PC-9 (cell line): ENCODE measurements at regions of chr15 and their contacts with region 1.

Region 1: DNA sequence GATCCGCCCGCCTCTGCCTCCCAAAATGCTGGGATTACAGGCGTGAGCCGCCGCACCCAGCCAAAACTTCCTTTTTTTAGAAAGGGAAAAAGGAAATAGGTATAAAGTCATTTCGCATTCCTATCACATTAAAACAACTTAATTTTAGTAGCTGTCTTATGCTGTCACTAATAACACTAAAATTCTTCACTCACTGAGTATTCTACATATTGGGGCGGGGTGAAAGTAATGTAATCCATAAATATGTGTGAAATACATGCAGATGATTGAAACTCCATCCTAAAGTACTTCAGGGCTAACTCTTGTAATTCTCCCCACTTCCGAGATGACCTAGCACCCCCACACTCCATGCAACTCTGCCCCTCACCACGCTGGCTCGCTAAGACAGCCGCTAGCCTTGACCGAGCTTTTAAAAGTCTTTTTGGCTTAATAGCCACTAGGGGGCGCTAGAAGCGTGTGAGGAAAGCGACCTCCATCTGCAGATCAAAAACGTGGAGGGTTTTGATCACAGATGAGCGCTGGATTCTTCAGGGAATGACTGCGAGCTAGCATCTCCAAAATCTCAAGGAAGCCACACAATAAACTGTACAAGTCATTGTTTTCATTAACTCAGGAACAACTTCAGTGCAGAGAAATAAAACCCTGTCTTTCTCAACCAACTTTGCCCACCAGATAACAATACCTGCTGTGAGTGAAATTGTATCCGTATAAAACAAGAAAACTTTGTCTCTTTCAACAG is 129.3 kb upstream of the IGF1R start:
- DNase-seq: peak; percentile 47 to 62
- H3K4me3 ChIP-seq: no peak overlapping the region
- H3K27ac ChIP-seq: no peak overlapping the region
- H3K4me1 ChIP-seq: no peaks in the 10 kb centered on the region
- H3K27me3 ChIP-seq: 0 out of 2 replicates have a peak, but pooled peaks cover 5% of the 10 kb centered on the region
- CTCF ChIP-seq: peak; percentile 88

Region 2: DNA sequence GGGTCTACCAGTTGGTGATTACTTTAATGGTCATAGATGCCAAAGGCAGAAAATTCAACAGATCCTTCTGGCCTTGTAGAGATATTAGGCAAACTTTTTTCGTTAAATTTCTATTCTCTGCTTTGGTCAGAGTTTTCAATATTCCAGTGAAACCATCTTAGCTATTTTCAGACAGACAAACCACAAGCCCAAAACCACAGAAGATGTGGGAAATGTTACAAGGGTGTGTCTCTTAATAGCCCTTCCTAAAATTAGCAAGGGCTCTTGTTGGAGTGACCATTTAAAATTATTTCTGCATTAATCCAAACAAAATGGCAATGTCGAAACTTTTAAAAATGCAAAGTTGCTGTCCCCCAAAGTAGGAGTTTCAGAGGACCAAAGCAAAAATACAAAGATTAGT is 455.7 kb before region 1 on chr15:
- CTCF ChIA-PET with region 1: no interaction called
- POLR2A ChIA-PET with region 1: no interaction called
- intact Hi-C with region 1: no loop called
- DNase-seq: no peak
- H3K4me3 ChIP-seq: no peak overlapping the region
- H3K27ac ChIP-seq: no peak overlapping the region
- H3K4me1 ChIP-seq: no peaks in the 10 kb centered on the region
- H3K27me3 ChIP-seq: peaks cover 17% of the 10 kb centered on the region; the same call in 1 of the 2 replicates
- CTCF ChIP-seq: no peak

Region 3: GRCh38 chr15:98653686-98654085 is 134.7 kb after region 1 on chr15:
- CTCF ChIA-PET with region 1: interaction called, 19 read pairs
- POLR2A ChIA-PET with region 1: no interaction called
- intact Hi-C with region 1: no loop called
- DNase-seq: no peak
- H3K4me3 ChIP-seq: no peak overlapping the region
- H3K27ac ChIP-seq: no peak overlapping the region
- H3K4me1 ChIP-seq: peaks cover 33% of the 10 kb centered on the region
- H3K27me3 ChIP-seq: no peaks in the 10 kb centered on the region
- CTCF ChIP-seq: no peak

Region 4: DNA sequence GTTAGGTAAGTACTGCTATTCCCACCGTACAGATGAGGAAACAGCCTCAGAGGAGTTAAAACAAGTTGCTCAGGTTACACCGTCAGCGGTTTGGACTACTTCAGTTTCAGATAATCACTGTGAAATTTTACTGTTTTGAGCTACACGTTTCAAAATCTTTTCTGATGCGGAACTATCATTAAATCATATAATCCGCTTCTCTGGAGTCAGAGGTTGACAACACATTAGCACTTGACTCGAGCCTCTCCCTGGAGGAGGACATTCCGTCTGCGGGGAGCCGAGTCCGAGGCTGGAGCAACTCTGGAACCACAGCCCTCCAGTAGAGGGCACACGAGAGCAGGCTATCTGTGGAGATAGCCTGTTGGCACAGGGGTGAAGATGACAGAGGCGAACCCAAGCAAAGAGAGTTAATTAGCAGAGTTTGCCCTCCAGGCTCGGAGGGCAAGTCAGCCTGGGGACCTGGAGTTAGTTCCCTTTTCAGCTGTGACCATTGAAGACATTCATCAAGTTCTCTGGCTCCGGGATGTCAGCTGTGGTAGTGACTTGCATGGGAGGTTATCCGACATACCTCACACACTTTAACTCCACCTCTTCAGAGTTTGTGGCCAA is 260.6 kb after region 1 on chr15:
- CTCF ChIA-PET with region 1: no interaction called
- POLR2A ChIA-PET with region 1: no interaction called
- intact Hi-C with region 1: loop called (anchors 10 kb)
- DNase-seq: peak; percentile 62 to 77
- H3K4me3 ChIP-seq: no peak overlapping the region
- H3K27ac ChIP-seq: no peak overlapping the region
- H3K4me1 ChIP-seq: peaks cover 7% of the 10 kb centered on the region; the same call in 1 of the 2 replicates
- H3K27me3 ChIP-seq: no peaks in the 10 kb centered on the region
- CTCF ChIP-seq: peak; percentile 91

Region 5: GRCh38 chr15:98850961-98851573 is 332.1 kb after region 1 on chr15:
- CTCF ChIA-PET with region 1: interaction called, 12 read pairs
- POLR2A ChIA-PET with region 1: no interaction called
- intact Hi-C with region 1: no loop called
- DNase-seq: peak; percentile 35 to 72
- H3K4me3 ChIP-seq: peak overlapping the region; percentile 59; the same call in 1 of the 2 replicates
- H3K27ac ChIP-seq: peak overlapping the region; percentile 31; the same call in 1 of the 2 replicates
- H3K4me1 ChIP-seq: peaks cover 50% of the 10 kb centered on the region
- H3K27me3 ChIP-seq: no peaks in the 10 kb centered on the region
- CTCF ChIP-seq: peak; percentile 79

Region 6: GRCh38 chr15:99076552-99077308 is 557.7 kb after region 1 on chr15:
- CTCF ChIA-PET with region 1: interaction called, 8 read pairs
- POLR2A ChIA-PET with region 1: no interaction called
- intact Hi-C with region 1: loop called (anchors 1 kb)
- DNase-seq: peak; percentile 51 to 58
- H3K4me3 ChIP-seq: peak overlapping the region; percentile 51; the same call in 1 of the 2 replicates
- H3K27ac ChIP-seq: no peak overlapping the region
- H3K4me1 ChIP-seq: no peaks in the 10 kb centered on the region
- H3K27me3 ChIP-seq: no peaks in the 10 kb centered on the region
- CTCF ChIP-seq: peak; percentile 92

Region 7: GRCh38 chr15:99213187-99213811 is 694.3 kb after region 1 on chr15:
- CTCF ChIA-PET with region 1: no interaction called
- POLR2A ChIA-PET with region 1: no interaction called
- intact Hi-C with region 1: loop called (anchors 5 kb)
- DNase-seq: peak in 1 of 2 experiments; percentile 69
- H3K4me3 ChIP-seq: no peak overlapping the region
- H3K27ac ChIP-seq: no peak overlapping the region
- H3K4me1 ChIP-seq: no peaks in the 10 kb centered on the region
- H3K27me3 ChIP-seq: no peaks in the 10 kb centered on the region
- CTCF ChIP-seq: peak; percentile 92